GM18951 (cell line): ENCODE measurements at regions of chr16 and their contacts with region 1.

Region 1: DNA sequence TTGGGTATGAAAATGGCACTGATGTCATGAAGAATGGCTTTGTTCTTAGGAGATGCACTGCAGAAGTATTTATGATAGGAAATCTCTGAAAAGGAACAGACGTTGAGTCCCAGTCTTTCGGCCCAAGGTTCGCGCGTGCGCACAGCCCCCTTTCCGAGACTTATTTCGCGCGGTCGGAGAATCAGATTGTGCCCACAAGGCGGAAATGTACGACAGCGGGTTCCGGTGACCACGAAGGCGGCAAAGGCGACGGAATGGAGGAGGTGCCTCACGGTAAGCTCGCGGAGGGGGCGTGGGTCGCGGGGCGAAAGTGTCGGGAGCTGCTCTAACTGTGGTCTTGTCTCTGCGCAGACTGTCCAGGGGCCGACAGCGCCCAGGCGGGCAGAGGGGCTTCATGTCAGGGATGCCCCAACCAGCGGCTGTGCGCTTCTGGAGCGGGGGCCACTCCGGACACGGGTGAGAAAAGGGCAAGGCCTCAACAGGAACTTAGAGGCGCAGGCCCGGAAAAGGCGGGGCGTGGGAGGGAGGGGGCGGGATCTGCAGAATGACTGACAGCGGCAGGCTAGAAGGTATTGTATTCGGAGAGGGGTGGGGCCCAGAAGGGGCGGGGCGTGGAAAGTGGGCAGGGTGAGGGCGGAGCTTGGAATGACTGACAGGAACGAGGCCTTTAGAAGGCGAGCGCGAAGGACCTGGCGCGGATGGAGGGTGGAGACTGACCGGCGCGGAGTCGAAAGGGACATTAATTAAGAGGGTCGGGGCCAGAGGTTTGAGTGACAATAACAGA is at the start of gene NUBP1:
- POLR2A ChIP-seq: peak; percentile 84

Region 2: GRCh38 chr16:10906914-10907756 is 163.3 kb after region 1 on chr16:
- in situ Hi-C with region 1: loop called (anchors 10 kb)
- POLR2A ChIP-seq: no peak